Caco-2 (cell line): ENCODE measurements at regions of chr11 and their contacts with region 1.

Region 1: DNA sequence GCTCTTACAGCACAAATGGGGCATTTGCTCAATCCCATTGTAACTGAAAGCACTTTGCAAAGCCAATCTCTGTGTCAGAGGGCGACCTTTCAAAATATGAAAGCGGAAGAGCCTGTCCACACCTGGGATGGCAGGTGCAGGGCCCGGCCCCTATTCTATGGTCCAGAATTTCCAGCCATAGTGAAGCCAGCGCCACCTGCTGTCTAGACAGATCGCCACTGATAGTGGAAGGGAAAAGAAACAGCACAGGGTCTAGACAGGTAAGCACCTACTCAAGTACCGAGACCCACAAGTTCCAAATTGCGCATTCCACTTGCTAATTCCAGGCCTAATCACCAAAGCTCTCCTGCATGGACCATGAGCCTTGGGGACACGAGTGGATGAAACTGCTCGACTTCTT is 141.4 kb downstream of the NTM start:
- DNase-seq: peak; percentile 65 to 71
- H3K4me3 ChIP-seq: no peak overlapping the region
- H3K4me3 Mint-ChIP-seq: no peak overlapping the region
- H3K27ac Mint-ChIP-seq: no peak overlapping the region
- H3K4me1 ChIP-seq: no peaks in the 10 kb centered on the region; the same call in 1 of the 2 replicates
- H3K4me1 Mint-ChIP-seq: no peaks in the 10 kb centered on the region
- H3K27me3 ChIP-seq: no peaks in the 10 kb centered on the region
- H3K27me3 Mint-ChIP-seq: peaks cover 8% of the 10 kb centered on the region
- CTCF ChIP-seq: peak; percentile 60 to 82

Region 2: GRCh38 chr11:131408025-131408640 is 103.7 kb before region 1 on chr11:
- CTCF ChIA-PET with region 1: no interaction called
- POLR2A ChIA-PET with region 1: no interaction called
- intact Hi-C with region 1: loop called (anchors 1 kb)
- DNase-seq: peak; percentile 62 to 74
- H3K4me3 ChIP-seq: no peak overlapping the region
- H3K4me3 Mint-ChIP-seq: no peak overlapping the region
- H3K27ac Mint-ChIP-seq: no peak overlapping the region
- H3K4me1 ChIP-seq: no peaks in the 10 kb centered on the region
- H3K4me1 Mint-ChIP-seq: no peaks in the 10 kb centered on the region
- H3K27me3 ChIP-seq: no peaks in the 10 kb centered on the region
- H3K27me3 Mint-ChIP-seq: peaks cover 6% of the 10 kb centered on the region
- CTCF ChIP-seq: peak; percentile 73 to 89